B cell (primary cell): ENCODE measurements at regions of chrX and their contacts with region 1.

Region 1: GRCh38 chrX:107205770-107206696 is at the starts of genes DNAAF6 and NUP62CL:
- DNase-seq: peak; percentile 80
- ATAC-seq: peak; percentile 95
- H3K4me3 ChIP-seq: peak within 1 kb of the TSS; percentile 9 to 69 (median 53)
- H3K4me3 Mint-ChIP-seq: peak within 1 kb of the TSS; percentile 95
- H3K27ac ChIP-seq: peak within 1 kb of the TSS; percentile 7 to 30
- H3K27ac Mint-ChIP-seq: peak within 1 kb of the TSS; percentile 72
- H3K4me1 ChIP-seq: peaks cover 3 to 4% of the 10 kb centered on the region in 2 donors
- H3K4me1 Mint-ChIP-seq: peaks cover 9% of the 10 kb centered on the region
- H3K27me3 ChIP-seq: no peaks in the 10 kb centered on the region
- H3K27me3 Mint-ChIP-seq: no peaks in the 10 kb centered on the region
- CTCF ChIP-seq: no peak
- total RNA-seq, gene DNAAF6: not detected in 2 replicates
- total RNA-seq, gene NUP62CL: 3.2 and 3.3 TPM in 2 replicates

Region 2: GRCh38 chrX:107118322-107119147 is 87.5 kb before region 1 on chrX and contains the start of gene RBM41:
- CTCF ChIA-PET with region 1: no interaction called
- POLR2A ChIA-PET with region 1: no interaction called
- intact Hi-C with region 1: loop called (anchors 5 kb)
- DNase-seq: peak; percentile 81
- ATAC-seq: peak; percentile 100
- H3K4me3 ChIP-seq: peak within 1 kb of the TSS; percentile 54 to 78 (median 70)
- H3K4me3 Mint-ChIP-seq: peak within 1 kb of the TSS; percentile 100
- H3K27ac ChIP-seq: peak within 1 kb of the TSS; percentile 50 to 73
- H3K27ac Mint-ChIP-seq: peak within 1 kb of the TSS; percentile 97
- H3K4me1 ChIP-seq: peaks cover 0 to 7% of the 10 kb centered on the region in 2 donors
- H3K4me1 Mint-ChIP-seq: peaks cover 28% of the 10 kb centered on the region
- H3K27me3 ChIP-seq: no peaks in the 10 kb centered on the region
- H3K27me3 Mint-ChIP-seq: no peaks in the 10 kb centered on the region
- CTCF ChIP-seq: no peak
- total RNA-seq, gene RBM41: 32.5 and 36.5 TPM in 2 replicates